Motor neuron (in vitro differentiated cells): ENCODE measurements at regions of chr18 and their contacts with region 1.

Region 1: GRCh38 chr18:62982600-62983251 is 267.4 kb downstream of the PHLPP1 start:
- ATAC-seq: peak; percentile 68 to 87 (median 73)
- H3K4me3 ChIP-seq: no peak overlapping the region
- H3K27ac ChIP-seq: no peak overlapping the region
- H3K4me1 ChIP-seq: peaks cover 2 to 6% of the 10 kb centered on the region in 2 donors

Region 2: DNA sequence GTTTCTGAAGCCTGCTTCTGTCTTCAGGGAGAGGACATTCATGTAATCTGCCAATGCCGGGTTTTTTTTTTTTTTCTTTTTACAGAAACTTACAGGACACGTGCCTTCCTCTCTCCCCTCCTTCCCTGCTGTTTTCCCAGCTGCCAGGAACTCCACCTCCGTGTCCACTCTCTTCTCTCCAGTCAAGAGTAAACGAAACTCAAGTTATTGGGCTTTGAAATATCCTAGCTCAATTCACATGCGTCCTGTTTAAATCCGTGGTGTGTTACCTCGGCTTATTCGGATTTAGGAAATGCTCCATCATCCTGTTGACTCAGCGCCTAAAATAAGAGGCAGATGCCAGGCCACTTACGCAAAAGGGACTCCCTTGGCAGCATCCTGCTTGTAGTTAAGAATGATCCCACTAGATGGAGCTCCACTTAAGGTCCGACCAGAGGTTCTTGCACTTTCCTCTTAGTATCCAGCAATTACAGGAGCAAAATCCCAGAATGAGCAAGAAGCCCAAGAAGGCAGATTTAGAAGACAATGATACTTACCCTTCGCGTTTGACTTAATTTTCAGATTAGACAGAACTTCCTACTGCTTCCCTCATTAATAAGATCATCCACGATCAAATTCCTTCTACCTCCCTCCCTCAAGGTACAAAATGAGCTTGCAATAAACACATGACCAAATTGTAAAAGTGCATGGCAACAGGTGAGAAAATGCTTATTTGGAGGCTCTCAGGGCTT is 557.1 kb before region 1 on chr18:
- in situ Hi-C with region 1: loop called in 1 of 9 experiments (anchors 25 kb)
- ATAC-seq: peak; percentile 88 to 97 (median 94)
- H3K4me3 ChIP-seq: peak overlapping the region; percentile 4 to 33 (median 19)
- H3K27ac ChIP-seq: no peak overlapping the region
- H3K4me1 ChIP-seq: no peaks in the 10 kb centered on the region

Region 3: DNA sequence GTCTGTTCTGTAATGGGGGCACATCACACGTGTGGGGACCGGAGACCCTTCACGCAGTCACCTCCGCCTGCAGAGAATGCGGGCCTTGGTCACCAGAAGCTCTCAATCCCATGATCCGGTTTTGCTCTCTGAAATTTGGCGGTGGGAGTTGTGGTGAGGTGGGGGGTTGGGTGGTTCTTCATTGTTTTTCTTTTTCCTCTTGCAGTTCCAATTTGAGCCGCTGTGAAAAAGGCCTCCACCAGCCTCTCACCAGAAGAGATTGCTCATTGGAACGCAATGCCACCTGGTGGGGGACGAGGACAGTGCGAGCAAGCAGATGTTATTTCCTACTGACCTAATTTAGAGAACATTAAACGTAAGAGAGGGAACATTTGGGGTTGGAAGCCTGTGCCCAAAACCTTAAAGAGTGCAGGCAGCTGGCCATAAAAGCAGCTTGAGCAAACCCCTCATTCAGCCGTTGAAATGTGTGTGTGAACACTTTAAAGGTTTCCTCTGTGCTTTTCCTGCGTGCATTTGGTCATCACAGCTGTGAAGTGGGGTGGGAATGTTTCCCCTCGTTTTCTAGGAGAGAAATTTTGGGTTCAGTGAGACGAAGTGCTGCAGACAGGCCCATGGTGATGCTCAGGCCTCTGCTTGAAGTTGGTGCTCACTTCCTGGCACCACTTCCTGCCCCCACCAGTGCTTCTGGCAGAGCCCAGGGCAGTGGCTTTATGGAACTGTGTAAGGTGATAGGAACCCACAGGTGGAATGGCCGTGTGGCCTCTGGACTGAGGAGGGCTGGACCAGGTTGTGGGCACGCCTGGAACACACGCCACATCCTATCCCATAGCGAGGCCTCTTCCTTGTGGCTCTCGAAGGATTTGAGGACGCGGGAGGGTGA is 398.2 kb before region 1 on chr18:
- in situ Hi-C with region 1: loop called in 8 of 9 experiments (anchors 25 kb)
- ATAC-seq: peak; percentile 77 to 91 (median 86)
- H3K4me3 ChIP-seq: no peak overlapping the region
- H3K27ac ChIP-seq: no peak overlapping the region
- H3K4me1 ChIP-seq: peaks cover 3% of the 10 kb centered on the region in 2 donors

Region 4: GRCh38 chr18:62714671-62715435 is 267.9 kb before region 1 on chr18:
- in situ Hi-C with region 1: loop called in 4 of 9 experiments (anchors 25 kb)
- ATAC-seq: peak; percentile 81 to 90 (median 88)
- H3K4me3 ChIP-seq: peak overlapping the region; percentile 52 to 65 (median 59)
- H3K27ac ChIP-seq: peak overlapping the region; percentile 87 to 88
- H3K4me1 ChIP-seq: peaks cover 4 to 5% of the 10 kb centered on the region in 2 donors

Region 5: GRCh38 chr18:63079114-63079513 is 96.4 kb after region 1 on chr18:
- in situ Hi-C with region 1: no loop called
- ATAC-seq: no peak
- H3K4me3 ChIP-seq: no peak overlapping the region
- H3K27ac ChIP-seq: no peak overlapping the region
- H3K4me1 ChIP-seq: peaks cover 0 to 5% of the 10 kb centered on the region in 2 donors